Activated CD4-positive, alpha-beta T cell treated with anti-CD3 and anti-CD28 coated beads for 36 hours (primary cell): ENCODE measurements at regions of chr1 and their contacts with region 1.

Region 1: DNA sequence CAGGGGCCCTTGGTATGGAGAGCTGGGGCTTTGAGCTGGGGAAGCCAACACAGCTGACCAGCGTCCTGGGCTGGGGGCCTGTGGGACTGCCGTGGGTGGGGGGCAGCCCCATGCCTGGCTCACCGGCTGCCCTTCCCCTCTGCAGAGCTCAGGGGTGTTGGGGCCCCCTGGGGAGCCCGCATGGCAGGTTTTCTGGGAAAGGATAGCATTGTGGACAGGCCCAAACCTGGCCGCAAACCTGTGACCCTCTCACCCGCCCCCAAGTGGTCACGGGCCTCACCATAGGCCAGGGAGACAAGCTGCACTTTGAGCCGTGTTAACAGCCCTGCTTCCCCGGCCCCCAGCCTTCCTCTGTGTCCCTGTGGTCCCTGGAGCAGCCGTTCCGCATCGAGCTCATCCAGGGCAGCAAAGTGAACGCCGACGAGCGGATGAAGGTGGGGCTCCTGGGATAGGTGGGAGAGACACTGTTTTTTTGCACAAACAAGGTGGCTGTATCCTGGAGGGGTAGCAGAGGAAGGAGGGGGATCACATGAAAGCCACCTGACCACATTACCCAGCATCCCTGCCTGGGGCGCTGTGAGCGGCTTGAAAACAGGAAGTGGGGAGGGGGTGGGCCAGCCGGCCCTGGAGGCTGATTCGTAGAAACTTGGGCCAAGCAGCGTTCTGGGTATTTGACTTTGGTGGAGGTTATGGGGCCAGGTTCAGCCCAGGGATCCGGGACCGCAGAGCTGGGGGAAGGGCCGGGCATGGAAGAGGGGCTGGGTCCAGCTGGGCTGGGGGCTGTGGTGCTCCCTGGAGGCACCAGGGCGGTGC is 65.9 kb downstream of the PIK3CD start:
- DNase-seq: peak; percentile 93
- ATAC-seq: peak; percentile 81
- H3K4me3 Mint-ChIP-seq: peak overlapping the region; percentile 76
- H3K27ac Mint-ChIP-seq: peak overlapping the region; percentile 93
- H3K4me1 Mint-ChIP-seq: peaks cover 62% of the 10 kb centered on the region
- H3K27me3 Mint-ChIP-seq: no peaks in the 10 kb centered on the region

Region 2: GRCh38 chr1:9671377-9672140 is 45.8 kb before region 1 on chr1:
- CTCF ChIA-PET with region 1: interaction called, 4 read pairs
- POLR2A ChIA-PET with region 1: no interaction called
- intact Hi-C with region 1: loop called in 1 of 2 experiments (anchors 5 kb)
- DNase-seq: peak; percentile 51
- ATAC-seq: peak; percentile 82
- H3K4me3 Mint-ChIP-seq: no peak overlapping the region
- H3K27ac Mint-ChIP-seq: peak overlapping the region; percentile 86
- H3K4me1 Mint-ChIP-seq: peaks cover 75% of the 10 kb centered on the region
- H3K27me3 Mint-ChIP-seq: no peaks in the 10 kb centered on the region